ENCODE measurements at regions of chr5 and their contacts with region 1.

Region 1: DNA sequence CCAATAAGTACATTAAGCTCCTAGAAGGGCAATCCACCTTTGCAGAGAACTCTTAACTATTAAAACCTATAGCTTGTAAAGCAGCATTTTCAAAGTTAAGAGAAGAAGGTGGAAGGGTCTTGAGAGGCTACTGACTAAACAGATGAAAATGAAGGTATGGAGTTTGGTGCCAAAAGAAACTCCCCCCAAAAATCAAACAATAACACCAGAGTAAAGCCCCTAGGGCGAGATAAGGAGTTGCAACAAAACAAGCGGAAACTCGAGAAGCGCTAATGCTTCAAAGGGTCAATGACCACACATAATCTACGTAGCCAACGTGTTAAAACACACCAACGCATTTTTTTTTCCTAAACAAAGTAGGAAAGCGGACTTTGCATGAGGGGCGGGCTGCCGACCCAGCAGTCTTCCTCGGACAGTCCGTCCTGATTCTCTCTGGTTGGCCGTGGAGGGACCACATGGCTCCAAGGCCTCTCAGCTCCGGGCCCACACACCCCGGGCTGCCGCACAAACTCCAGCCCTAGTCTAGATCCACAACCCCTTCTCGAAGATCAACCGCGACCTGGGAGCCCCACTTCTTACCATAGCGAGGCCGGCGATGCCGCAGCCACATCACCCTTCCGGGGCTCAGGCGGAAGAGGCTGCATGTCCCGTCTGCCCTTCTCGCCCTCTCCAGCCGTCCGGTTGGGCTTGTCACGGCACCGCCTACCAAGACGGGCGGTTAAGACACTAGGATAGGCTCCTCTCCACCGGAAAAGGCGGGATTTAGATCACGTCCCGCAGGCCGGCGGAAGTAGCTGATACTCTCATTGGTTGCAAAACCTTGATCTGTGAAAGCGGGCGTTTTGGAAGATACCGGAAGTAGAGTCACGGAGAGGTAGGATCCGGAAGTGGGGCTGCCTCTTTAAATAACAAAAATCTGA is at the starts of genes TMEM167A and XRCC4:
- DNase-seq: peak; percentile 71 to 97 (median 94)
- ATAC-seq: peak; percentile 99
- H3K4me3 ChIP-seq: peak within 1 kb of the TSS; percentile 78
- H3K4me3 Mint-ChIP-seq: peak within 1 kb of the TSS; percentile 93 to 99 (median 98)
- H3K27ac ChIP-seq: peak within 1 kb of the TSS; percentile 83
- H3K27ac Mint-ChIP-seq: peak within 1 kb of the TSS; percentile 95 to 99 (median 97)
- H3K4me1 ChIP-seq: peaks cover 5 to 16% of the 10 kb centered on the region in 2 donors
- H3K4me1 Mint-ChIP-seq: peaks cover 35 to 65% (median 62%) of the 10 kb centered on the region in 7 donors
- H3K27me3 ChIP-seq: no peaks in the 10 kb centered on the region
- H3K27me3 Mint-ChIP-seq: no peaks in the 10 kb centered on the region
- total RNA-seq, gene TMEM167A: 39.5 to 73.4 (median 42.3) TPM
- total RNA-seq, gene XRCC4: 2.9 to 7.4 (median 4.7) TPM

Region 2: DNA sequence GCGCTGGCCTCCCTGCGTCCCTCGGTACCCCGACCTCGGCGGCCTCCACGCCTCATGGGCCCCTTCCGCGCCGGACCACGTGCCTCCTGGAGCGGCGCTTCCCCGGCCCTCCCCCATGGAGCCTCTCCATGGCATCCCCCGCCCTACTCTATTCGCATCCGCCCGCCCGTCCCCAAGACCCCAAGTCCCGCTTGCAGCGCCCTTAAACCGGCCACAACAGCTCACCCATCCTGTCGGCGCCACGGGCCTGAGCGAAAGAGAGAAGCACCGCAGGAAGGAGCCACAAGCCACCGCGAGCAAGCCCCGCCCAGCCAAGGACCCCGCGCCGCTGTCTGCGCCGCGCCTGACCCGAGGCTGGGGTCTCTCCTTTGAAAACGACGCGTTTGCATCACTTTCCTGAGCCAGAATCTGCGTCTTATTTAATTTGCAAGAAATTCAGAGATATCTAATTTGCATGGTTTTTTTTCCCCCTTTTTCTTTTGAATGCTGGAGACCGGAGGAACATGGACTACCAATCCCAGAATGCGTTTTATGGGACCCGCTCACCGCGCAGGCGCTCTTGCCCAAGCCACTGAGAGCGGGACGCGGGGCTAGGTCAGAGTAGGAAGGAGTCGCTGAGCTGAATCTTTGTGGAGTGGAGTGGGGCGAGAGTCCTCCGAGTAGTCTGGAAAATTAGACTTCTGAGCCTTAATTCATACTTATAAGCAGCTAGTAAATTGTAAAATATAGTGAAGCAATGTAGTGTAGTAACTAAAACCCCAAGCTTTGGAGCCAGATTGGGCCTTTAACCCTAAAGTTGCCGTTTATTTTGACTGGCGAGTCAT is 798.7 kb before region 1 on chr5 and contains the start of gene RPS23:
- CTCF ChIA-PET with region 1: no interaction called
- POLR2A ChIA-PET with region 1: interaction called, 15 read pairs
- intact Hi-C with region 1: loop called (anchors 1 kb)
- DNase-seq: peak; percentile 78 to 90 (median 85)
- ATAC-seq: peak; percentile 96
- H3K4me3 ChIP-seq: peak within 1 kb of the TSS; percentile 72
- H3K4me3 Mint-ChIP-seq: peak within 1 kb of the TSS; percentile 87 to 98 (median 94)
- H3K27ac ChIP-seq: peak within 1 kb of the TSS; percentile 80
- H3K27ac Mint-ChIP-seq: peak within 1 kb of the TSS; percentile 94 to 99 (median 96)
- H3K4me1 ChIP-seq: peaks cover 12 to 16% of the 10 kb centered on the region in 2 donors
- H3K4me1 Mint-ChIP-seq: peaks cover 13 to 65% (median 39%) of the 10 kb centered on the region in 7 donors
- H3K27me3 ChIP-seq: no peaks in the 10 kb centered on the region
- H3K27me3 Mint-ChIP-seq: no peaks in the 10 kb centered on the region
- total RNA-seq, gene RPS23: 2,233 to 4,335 (median 3,874) TPM

Region 3: DNA sequence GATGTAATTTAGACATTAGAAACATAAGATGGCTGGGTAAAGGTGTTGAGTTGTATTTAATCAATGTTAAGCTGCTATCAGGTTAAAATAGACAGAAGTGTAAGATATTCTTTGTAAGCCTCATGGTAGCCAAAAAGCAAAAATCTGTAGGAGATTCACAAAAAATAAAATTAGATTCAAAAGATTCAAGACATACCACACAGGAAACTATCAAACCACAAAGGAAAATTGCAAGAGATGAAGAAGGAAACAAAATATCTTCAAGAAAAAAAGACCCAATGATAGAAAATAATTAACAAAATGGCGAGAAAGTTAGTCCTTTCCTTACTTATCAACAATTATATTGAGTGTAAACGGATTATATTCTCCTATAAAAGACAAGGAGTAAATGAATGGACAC is 15.6 kb after region 1 on chr5:
- CTCF ChIA-PET with region 1: no interaction called
- POLR2A ChIA-PET with region 1: interaction called, 5 read pairs
- intact Hi-C with region 1: loop called in 1 of 2 experiments (anchors 1 kb)
- DNase-seq: peak in 6 of 9 donors; percentile 14 to 39 (median 26)
- ATAC-seq: no peak
- H3K4me3 ChIP-seq: no peak overlapping the region
- H3K4me3 Mint-ChIP-seq: peak overlapping the region; percentile 1 to 78 (median 56)
- H3K27ac ChIP-seq: no peak overlapping the region
- H3K27ac Mint-ChIP-seq: peak overlapping the region in 8 of 9 donors; percentile 15 to 70 (median 46)
- H3K4me1 ChIP-seq: peaks cover 7 to 11% of the 10 kb centered on the region in 2 donors
- H3K4me1 Mint-ChIP-seq: peaks cover 12 to 37% (median 35%) of the 10 kb centered on the region in 7 donors
- H3K27me3 ChIP-seq: no peaks in the 10 kb centered on the region
- H3K27me3 Mint-ChIP-seq: no peaks in the 10 kb centered on the region

Region 4: GRCh38 chr5:83340511-83340918 is 263.5 kb after region 1 on chr5:
- CTCF ChIA-PET with region 1: no interaction called
- POLR2A ChIA-PET with region 1: no interaction called
- intact Hi-C with region 1: loop called in 1 of 2 experiments (anchors 5 kb)
- DNase-seq: peak in 6 of 9 donors; percentile 2 to 49 (median 26)
- ATAC-seq: peak; percentile 75
- H3K4me3 ChIP-seq: no peak overlapping the region
- H3K4me3 Mint-ChIP-seq: peak overlapping the region in 4 of 10 donors; percentile 5 to 78 (median 25)
- H3K27ac ChIP-seq: no peak overlapping the region
- H3K27ac Mint-ChIP-seq: peak overlapping the region in 6 of 9 donors; percentile 23 to 81 (median 41)
- H3K4me1 ChIP-seq: peaks cover 0 to 3% of the 10 kb centered on the region in 2 donors
- H3K4me1 Mint-ChIP-seq: peaks cover 12 to 28% (median 23%) of the 10 kb centered on the region in 7 donors
- H3K27me3 ChIP-seq: no peaks in the 10 kb centered on the region
- H3K27me3 Mint-ChIP-seq: no peaks in the 10 kb centered on the region

Region 5: GRCh38 chr5:83473346-83474163 is 396.6 kb after region 1 on chr5:
- CTCF ChIA-PET with region 1: no interaction called
- POLR2A ChIA-PET with region 1: no interaction called
- intact Hi-C with region 1: loop called in 1 of 2 experiments (anchors 2 kb)
- DNase-seq: peak in 8 of 9 donors; percentile 16 to 60 (median 26)
- ATAC-seq: peak; percentile 66
- H3K4me3 ChIP-seq: peak overlapping the region; percentile 24
- H3K4me3 Mint-ChIP-seq: peak overlapping the region; percentile 78 to 90 (median 84)
- H3K27ac ChIP-seq: no peak overlapping the region
- H3K27ac Mint-ChIP-seq: peak overlapping the region in 1 of 9 donors; percentile 38
- H3K4me1 ChIP-seq: peaks cover 4 to 23% of the 10 kb centered on the region in 2 donors
- H3K4me1 Mint-ChIP-seq: peaks cover 17 to 42% (median 38%) of the 10 kb centered on the region in 7 donors
- H3K27me3 ChIP-seq: peaks cover 0 to 15% of the 10 kb centered on the region in 2 donors
- H3K27me3 Mint-ChIP-seq: peaks cover 73 to 86% (median 80%) of the 10 kb centered on the region in 5 donors

Measured in naive thymus-derived CD4-positive, alpha-beta T cell (primary cell).